Activated naive CD4-positive, alpha-beta T cell treated with anti-CD3 and anti-CD28 coated beads for 36 hours (primary cell): ENCODE measurements at regions of chr11 and their contacts with region 1.

Region 1: DNA sequence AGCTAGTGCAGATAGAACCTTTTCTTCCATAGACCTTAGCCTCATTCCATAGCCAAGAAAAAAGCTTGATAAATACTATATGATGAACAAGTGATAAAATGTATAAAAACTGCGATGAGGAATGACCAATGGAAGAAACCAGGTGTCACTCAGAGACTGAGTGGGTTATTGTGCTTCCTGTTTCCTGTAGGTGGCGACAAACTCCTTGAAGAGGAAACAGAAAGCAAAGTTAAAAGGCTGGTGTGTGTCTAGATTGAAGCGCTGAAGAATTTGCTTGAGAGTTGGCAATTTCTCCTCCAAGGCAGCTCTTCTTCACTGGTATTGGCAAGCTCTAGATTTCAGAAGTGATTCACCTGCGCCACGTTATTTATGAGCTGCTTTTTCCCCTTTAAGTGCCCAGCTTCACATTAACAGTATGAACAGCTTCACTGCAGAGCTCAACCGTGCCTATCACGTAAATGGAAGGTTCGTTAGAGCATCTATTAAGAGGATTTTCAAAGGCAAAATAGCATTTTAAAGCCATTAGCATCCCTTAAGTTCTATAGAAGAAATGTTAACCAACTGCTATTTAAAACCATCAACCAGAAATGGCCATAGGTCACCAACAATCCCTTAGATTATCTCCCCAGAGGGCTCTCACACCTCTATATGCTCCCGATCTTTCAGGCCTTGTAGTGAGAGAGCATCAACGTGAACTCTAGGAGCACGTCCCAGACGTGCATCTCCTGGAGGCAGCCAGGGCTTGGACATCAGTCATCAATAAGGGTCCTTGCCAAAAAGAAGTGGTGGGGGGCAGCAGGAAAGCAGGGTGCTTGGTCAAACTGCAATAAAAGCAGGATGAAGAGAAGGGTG is 179.4 kb downstream of the CADM1 start:
- DNase-seq: peak; percentile 34
- H3K4me3 Mint-ChIP-seq: no peak overlapping the region
- H3K27ac Mint-ChIP-seq: no peak overlapping the region
- H3K4me1 Mint-ChIP-seq: peaks cover 2% of the 10 kb centered on the region
- H3K27me3 Mint-ChIP-seq: peaks cover 3% of the 10 kb centered on the region

Region 2: GRCh38 chr11:116224154-116224888 is 899.5 kb after region 1 on chr11:
- CTCF ChIA-PET with region 1: interaction called, 5 read pairs
- intact Hi-C with region 1: loop called (anchors 1 kb)
- DNase-seq: peak; percentile 59
- H3K4me3 Mint-ChIP-seq: no peak overlapping the region
- H3K27ac Mint-ChIP-seq: no peak overlapping the region
- H3K4me1 Mint-ChIP-seq: no peaks in the 10 kb centered on the region
- H3K27me3 Mint-ChIP-seq: no peaks in the 10 kb centered on the region